Activated CD4-positive, alpha-beta T cell treated with anti-CD3 and anti-CD28 coated beads for 36 hours (primary cell): ENCODE measurements at regions of chr11 and their contacts with region 1.

Region 1: GRCh38 chr11:48172818-48173609 is 43.6 kb upstream of the OR4B1 start:
- DNase-seq: peak; percentile 80
- ATAC-seq: peak; percentile 87
- H3K4me3 Mint-ChIP-seq: no peak overlapping the region
- H3K27ac Mint-ChIP-seq: no peak overlapping the region
- H3K4me1 Mint-ChIP-seq: peaks cover 23% of the 10 kb centered on the region
- H3K27me3 Mint-ChIP-seq: no peaks in the 10 kb centered on the region

Region 2: GRCh38 chr11:48109046-48109666 is 63.9 kb before region 1 on chr11:
- CTCF ChIA-PET with region 1: no interaction called
- POLR2A ChIA-PET with region 1: no interaction called
- intact Hi-C with region 1: no loop called
- DNase-seq: no peak
- ATAC-seq: peak; percentile 34
- H3K4me3 Mint-ChIP-seq: peak overlapping the region; percentile 66
- H3K27ac Mint-ChIP-seq: peak overlapping the region; percentile 87
- H3K4me1 Mint-ChIP-seq: peaks cover 49% of the 10 kb centered on the region
- H3K27me3 Mint-ChIP-seq: no peaks in the 10 kb centered on the region

Region 3: DNA sequence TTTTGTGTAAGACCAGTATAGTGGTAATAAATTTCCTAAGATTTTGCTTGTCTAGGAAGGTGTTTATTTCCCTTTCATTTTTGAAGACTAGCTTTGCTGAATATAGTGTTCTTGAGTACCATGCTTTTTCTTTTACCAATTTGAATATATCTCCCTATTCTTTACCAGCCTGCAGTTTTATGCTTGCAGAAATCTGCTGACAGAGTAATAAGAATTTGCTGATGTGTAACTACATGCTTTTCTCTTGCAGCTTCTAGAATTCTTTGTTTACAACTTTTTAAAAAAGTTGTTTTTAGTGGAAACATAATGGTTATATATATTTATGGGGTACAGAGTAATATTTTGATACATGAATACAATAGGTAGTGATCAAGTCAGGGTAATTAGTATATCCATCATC is 1360.2 kb after region 1 on chr11:
- CTCF ChIA-PET with region 1: no interaction called
- POLR2A ChIA-PET with region 1: no interaction called
- intact Hi-C with region 1: loop called in 1 of 2 experiments (anchors 5 kb)
- DNase-seq: no peak
- ATAC-seq: no peak
- H3K4me3 Mint-ChIP-seq: no peak overlapping the region
- H3K27ac Mint-ChIP-seq: no peak overlapping the region
- H3K4me1 Mint-ChIP-seq: no peaks in the 10 kb centered on the region
- H3K27me3 Mint-ChIP-seq: no peaks in the 10 kb centered on the region

Region 4: GRCh38 chr11:49995565-49995964 is 1822.6 kb after region 1 on chr11:
- CTCF ChIA-PET with region 1: no interaction called
- POLR2A ChIA-PET with region 1: no interaction called
- intact Hi-C with region 1: loop called in 1 of 2 experiments (anchors 5 kb)
- DNase-seq: peak; percentile 65
- ATAC-seq: no peak
- H3K4me3 Mint-ChIP-seq: no peak overlapping the region
- H3K27ac Mint-ChIP-seq: no peak overlapping the region
- H3K4me1 Mint-ChIP-seq: no peaks in the 10 kb centered on the region
- H3K27me3 Mint-ChIP-seq: no peaks in the 10 kb centered on the region